ENCODE measurements at regions of chr19 and their contacts with region 1.

Region 1: GRCh38 chr19:55809381-55810058 is 22.3 kb downstream of the NLRP11 start:
- DNase-seq: peak; percentile 78
- ATAC-seq: peak; percentile 90
- H3K4me3 Mint-ChIP-seq: no peak overlapping the region
- H3K27ac Mint-ChIP-seq: no peak overlapping the region
- H3K4me1 Mint-ChIP-seq: peaks cover 2% of the 10 kb centered on the region
- H3K27me3 Mint-ChIP-seq: peaks cover 13% of the 10 kb centered on the region
- CTCF ChIP-seq: peak; percentile 75

Region 2: DNA sequence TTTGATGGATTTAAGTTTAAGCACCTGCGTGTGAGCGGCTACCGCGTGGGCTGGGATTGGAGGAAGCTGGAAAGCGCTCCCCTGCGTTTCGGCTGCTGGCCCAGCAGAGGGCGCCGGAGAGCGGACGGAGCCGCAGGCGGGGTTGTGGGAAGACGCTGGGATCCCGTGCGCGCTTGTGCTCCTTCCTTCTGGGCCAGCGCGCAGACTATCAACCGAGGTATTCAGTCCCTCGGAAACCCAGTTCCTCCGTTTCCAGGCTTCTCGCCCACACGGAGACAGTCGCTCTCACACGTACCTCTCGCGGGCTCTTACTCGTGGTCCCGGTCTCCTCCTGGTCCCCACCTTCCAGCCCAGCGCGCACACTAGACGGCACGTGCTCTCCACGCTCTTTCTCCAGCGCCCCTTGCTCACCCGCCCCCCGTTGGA is 105.7 kb before region 1 on chr19:
- CTCF ChIA-PET with region 1: interaction called, 10 read pairs
- POLR2A ChIA-PET with region 1: no interaction called
- intact Hi-C with region 1: no loop called
- DNase-seq: peak; percentile 61
- ATAC-seq: peak; percentile 85
- H3K4me3 Mint-ChIP-seq: no peak overlapping the region
- H3K27ac Mint-ChIP-seq: no peak overlapping the region
- H3K4me1 Mint-ChIP-seq: peaks cover 2% of the 10 kb centered on the region
- H3K27me3 Mint-ChIP-seq: no peaks in the 10 kb centered on the region
- CTCF ChIP-seq: peak; percentile 82

Region 3: GRCh38 chr19:55738302-55738701 is 71.2 kb before region 1 on chr19 and contains the start of gene NLRP9:
- CTCF ChIA-PET with region 1: no interaction called
- POLR2A ChIA-PET with region 1: no interaction called
- intact Hi-C with region 1: no loop called
- DNase-seq: no peak
- ATAC-seq: no peak
- H3K4me3 Mint-ChIP-seq: no peak within 1 kb of the TSS
- H3K27ac Mint-ChIP-seq: no peak within 1 kb of the TSS
- H3K4me1 Mint-ChIP-seq: no peaks in the 10 kb centered on the region
- H3K27me3 Mint-ChIP-seq: peaks cover 8% of the 10 kb centered on the region
- CTCF ChIP-seq: no peak
- total RNA-seq, gene NLRP9: not detected

Region 4: DNA sequence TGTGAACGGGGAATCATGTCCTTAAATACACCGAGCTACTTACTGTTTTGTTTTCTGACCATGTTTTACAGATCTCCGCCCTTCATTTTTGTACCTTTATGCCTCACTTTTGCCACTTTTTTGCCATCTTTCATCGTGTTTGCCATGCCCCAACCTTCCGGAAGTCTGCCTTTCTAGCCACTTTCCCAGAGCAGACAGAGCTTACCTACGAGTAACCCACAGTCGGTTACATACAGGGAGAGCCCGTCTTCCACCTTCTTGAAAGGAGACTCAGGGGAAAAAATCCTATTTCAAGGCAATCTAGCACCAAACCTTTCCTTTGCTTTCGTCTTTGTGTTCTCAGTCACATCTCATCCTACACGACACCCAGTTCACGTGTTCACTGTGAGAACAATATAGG is 14.5 kb before region 1 on chr19:
- CTCF ChIA-PET with region 1: no interaction called
- POLR2A ChIA-PET with region 1: no interaction called
- intact Hi-C with region 1: no loop called
- DNase-seq: no peak
- ATAC-seq: no peak
- H3K4me3 Mint-ChIP-seq: no peak overlapping the region
- H3K27ac Mint-ChIP-seq: no peak overlapping the region
- H3K4me1 Mint-ChIP-seq: no peaks in the 10 kb centered on the region
- H3K27me3 Mint-ChIP-seq: no peaks in the 10 kb centered on the region
- CTCF ChIP-seq: no peak

Measured in activated CD8-positive, alpha-beta T cell treated with anti-CD3 and anti-CD28 coated beads for 36 hours (primary cell).